Right ventricle myocardium inferior (tissue), 1 donor: ENCODE measurements at regions of chr1 and their contacts with region 1.

Region 1: GRCh38 chr1:229341774-229342655 is 832 bp downstream of the CCSAP start:
- DNase-seq: peak; percentile 91
- ATAC-seq: peak; percentile 97

Region 2: GRCh38 chr1:229270547-229271447 is 71.2 kb before region 1 on chr1 and contains the start of gene RAB4A:
- intact Hi-C with region 1: loop called (anchors 5 kb)
- DNase-seq: peak; percentile 95
- ATAC-seq: peak; percentile 97
- total RNA-seq, gene RAB4A: 131 TPM

Region 3: GRCh38 chr1:229643996-229644745 is 302.2 kb after region 1 on chr1:
- intact Hi-C with region 1: no loop called
- DNase-seq: no peak
- ATAC-seq: no peak